ENCODE measurements at regions of chr10 and their contacts with region 1.

Region 1: GRCh38 chr10:99620713-99621453 is 644 bp upstream of the SLC25A28 start:
- DNase-seq: peak; percentile 90
- H3K4me3 ChIP-seq: peak overlapping the region; percentile 83 to 84
- H3K27ac ChIP-seq: peak overlapping the region; percentile 97 to 98
- H3K4me1 ChIP-seq: peaks cover 7% of the 10 kb centered on the region
- H3K27me3 ChIP-seq: no peaks in the 10 kb centered on the region
- CTCF ChIP-seq: peak in 2 of 4 experiments; percentile 5 to 40
- POLR2A ChIP-seq: peak; percentile 79

Region 2: GRCh38 chr10:99430451-99431189 is 190.3 kb before region 1 on chr10 and contains the start of gene GOT1:
- intact Hi-C with region 1: loop called (anchors 2 kb)
- DNase-seq: peak; percentile 98
- H3K4me3 ChIP-seq: peak within 1 kb of the TSS; percentile 66 to 89
- H3K27ac ChIP-seq: peak within 1 kb of the TSS; percentile 87 to 93
- H3K4me1 ChIP-seq: peaks cover 7% of the 10 kb centered on the region
- H3K27me3 ChIP-seq: no peaks in the 10 kb centered on the region
- CTCF ChIP-seq: no peak
- POLR2A ChIP-seq: peak; percentile 42
- total RNA-seq, gene GOT1: 19.7 to 20.3 TPM

Region 3: DNA sequence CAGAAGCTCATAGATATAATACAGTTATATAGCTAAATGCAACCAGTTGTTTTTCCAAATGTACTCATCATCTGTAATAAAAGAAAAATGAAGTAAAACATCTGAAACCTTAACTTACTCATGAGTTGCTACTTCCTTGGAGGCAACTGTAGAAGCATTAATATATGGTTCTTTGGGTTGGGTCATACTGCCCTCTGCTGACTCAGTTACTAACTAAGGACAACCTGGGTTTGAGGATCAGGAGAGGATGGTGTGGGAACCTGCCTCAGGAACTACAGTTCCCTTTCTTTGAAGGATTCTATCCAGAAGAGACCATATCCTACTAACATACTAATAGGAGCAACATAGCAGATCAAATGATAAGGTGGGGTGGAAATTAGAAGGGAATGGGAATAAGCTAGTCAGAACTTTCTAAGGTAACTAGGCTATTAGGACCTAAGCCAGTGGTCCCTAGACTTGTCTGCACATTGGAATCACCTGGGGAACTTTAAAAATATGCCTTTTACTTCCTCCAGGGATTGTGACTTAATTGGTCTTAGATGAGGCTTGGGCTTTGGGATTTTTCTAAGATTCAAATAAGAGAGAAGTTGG is 90.3 kb after region 1 on chr10:
- intact Hi-C with region 1: loop called (anchors 2 kb)
- DNase-seq: peak; percentile 51
- H3K4me3 ChIP-seq: no peak overlapping the region
- H3K27ac ChIP-seq: no peak overlapping the region
- H3K4me1 ChIP-seq: no peaks in the 10 kb centered on the region
- H3K27me3 ChIP-seq: no peaks in the 10 kb centered on the region
- CTCF ChIP-seq: peak in 3 of 4 experiments; percentile 43 to 62 (median 54)
- POLR2A ChIP-seq: no peak

Region 4: DNA sequence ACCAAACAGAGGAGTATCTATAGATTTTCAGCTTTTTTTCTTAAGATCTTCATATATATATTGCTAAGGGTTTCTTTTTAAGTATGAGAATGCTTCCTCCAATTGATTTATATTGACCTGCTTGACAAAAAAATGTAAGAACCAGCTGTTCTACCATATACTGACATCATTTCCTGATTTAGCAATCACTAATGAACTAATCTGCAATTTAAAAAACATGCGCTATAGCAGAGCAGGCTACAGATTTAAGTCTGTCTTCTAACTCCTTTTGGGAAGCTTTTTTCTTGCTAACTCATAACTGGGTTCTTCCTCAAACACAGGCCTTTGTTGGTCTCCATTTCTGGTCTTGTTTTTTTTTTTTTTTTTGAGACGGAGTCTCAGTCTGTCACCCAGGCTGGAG is 194.7 kb after region 1 on chr10:
- intact Hi-C with region 1: no loop called
- DNase-seq: no peak
- H3K4me3 ChIP-seq: no peak overlapping the region
- H3K27ac ChIP-seq: no peak overlapping the region
- H3K4me1 ChIP-seq: peaks cover 10% of the 10 kb centered on the region
- H3K27me3 ChIP-seq: no peaks in the 10 kb centered on the region
- CTCF ChIP-seq: no peak
- POLR2A ChIP-seq: no peak